BJ (cell line): ENCODE measurements at regions of chr11 and their contacts with region 1.

Region 1: DNA sequence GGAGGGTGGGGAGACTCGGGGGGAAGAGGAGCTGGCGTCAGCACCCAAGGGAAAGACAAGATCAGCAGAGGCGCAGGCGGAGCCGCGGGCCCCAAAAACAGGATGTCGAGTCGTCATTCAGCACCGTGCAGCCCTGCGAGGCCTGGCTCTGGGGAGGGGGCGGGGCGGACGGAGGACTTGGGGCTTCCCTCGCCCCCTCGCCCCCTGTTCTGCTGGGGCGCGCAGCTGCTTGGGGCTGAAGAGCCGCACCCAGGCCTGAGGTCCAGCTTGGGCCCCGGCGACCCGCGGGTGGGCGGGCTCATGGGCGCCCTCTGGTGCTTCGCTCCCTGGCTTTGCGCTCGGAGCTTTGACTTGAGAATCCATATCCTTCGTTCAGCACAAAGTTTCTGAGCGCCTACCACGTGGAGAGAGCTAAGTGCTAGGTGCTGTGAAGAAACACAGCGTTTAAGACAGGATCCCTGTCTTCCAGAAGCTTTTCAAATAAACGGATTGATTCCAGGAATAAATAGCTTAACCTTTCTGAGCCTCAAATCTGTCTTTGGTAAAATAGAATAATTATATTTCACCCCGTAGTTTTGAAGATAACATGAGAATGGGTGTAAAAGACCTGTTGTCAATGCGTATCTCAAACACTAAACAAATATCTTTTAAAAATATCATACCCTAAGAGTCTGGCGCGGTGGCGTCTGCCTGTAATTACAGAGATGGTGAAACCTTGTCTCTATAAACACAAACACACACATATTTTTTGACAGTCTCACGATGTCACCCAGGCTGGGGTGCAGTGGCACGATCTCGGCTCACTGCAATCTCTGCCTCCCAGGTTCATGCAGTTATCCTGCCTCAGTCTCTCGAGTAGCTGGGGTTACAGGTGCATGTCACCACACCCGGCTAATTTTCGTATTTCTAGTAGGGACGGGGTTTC is 929 bp upstream of the RHOG start:
- DNase-seq: peak; percentile 34
- H3K4me3 ChIP-seq: peak overlapping the region; percentile 80
- H3K27me3 ChIP-seq: no peaks in the 10 kb centered on the region
- CTCF ChIP-seq: peak; percentile 94

Region 2: DNA sequence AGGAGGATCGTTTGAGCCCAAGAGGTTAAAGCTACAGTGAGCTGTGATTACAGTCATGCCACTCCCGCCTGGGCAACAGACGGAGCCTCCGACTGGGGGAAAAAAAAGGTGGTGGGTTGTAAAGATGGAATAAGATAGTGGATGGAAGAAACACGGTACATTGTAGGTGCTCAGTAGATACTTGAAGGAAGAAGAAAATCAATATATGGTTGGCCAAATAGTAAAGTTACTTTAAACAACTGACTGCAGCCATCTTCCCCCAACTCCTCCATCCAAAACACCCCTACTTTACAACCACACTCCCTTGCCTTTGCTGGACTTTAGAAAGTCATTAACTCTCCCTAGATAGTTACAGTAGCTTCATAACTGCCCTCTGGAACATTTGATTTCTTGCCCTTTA is 41.8 kb before region 1 on chr11:
- CTCF ChIA-PET with region 1: no interaction called
- POLR2A ChIA-PET with region 1: no interaction called
- DNase-seq: no peak
- H3K4me3 ChIP-seq: no peak overlapping the region
- H3K27me3 ChIP-seq: no peaks in the 10 kb centered on the region
- CTCF ChIP-seq: no peak

Region 3: GRCh38 chr11:3861683-3862082 is 20.0 kb after region 1 on chr11:
- CTCF ChIA-PET with region 1: no interaction called
- POLR2A ChIA-PET with region 1: no interaction called
- DNase-seq: no peak
- H3K4me3 ChIP-seq: no peak overlapping the region
- H3K27me3 ChIP-seq: no peaks in the 10 kb centered on the region
- CTCF ChIP-seq: no peak

Region 4: GRCh38 chr11:4065601-4066377 is 224.1 kb after region 1 on chr11:
- CTCF ChIA-PET with region 1: interaction called, 524 read pairs
- POLR2A ChIA-PET with region 1: no interaction called
- DNase-seq: no peak
- H3K4me3 ChIP-seq: no peak overlapping the region
- H3K27me3 ChIP-seq: no peaks in the 10 kb centered on the region
- CTCF ChIP-seq: no peak